GM12878 (cell line): ENCODE measurements at regions of chr4 and their contacts with region 1.

Region 1: DNA sequence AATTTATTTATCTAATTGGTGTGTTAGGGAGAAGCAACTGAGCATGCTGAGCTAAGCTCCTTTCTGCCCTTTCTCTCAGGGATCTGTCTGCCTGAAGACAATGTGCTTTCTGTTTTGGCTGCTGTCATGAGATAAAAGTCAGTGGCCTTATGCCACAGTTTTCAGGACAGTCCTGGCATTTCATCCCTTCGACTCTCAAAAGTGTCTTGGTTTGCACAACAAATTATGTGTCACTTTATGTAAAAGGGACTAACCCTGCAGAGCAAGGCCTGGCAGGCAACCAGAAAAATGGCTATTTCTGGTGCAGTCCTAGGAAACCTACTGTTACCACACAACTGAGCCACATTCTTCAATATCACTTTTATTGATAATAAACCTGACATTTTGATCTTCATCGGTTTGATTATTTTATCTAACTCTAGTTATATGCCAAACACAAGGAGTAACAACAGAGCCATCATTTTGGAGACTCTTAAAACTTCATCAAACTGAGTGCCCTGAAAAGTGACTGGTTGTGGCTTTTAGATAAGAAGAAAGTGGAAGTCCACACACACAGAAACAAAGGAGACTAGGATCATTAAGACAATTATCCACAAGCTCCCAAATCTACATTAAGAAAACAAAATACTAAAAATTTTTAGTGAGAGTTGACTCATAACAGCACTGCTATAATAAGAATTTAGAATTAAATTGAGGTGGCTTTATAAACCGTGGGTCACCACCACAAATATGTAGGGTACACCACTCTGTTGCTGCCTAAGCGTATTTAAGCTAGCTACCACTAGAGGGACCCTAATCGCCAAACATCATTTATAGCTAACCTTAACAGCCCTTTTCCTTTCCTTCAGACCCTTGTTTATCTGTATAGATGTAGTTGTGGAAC is 95.9 kb upstream of the PTPN13 start:
- DNase-seq: no peak
- ATAC-seq: peak; percentile 93
- H3K4me3 ChIP-seq: no peak overlapping the region
- H3K27ac ChIP-seq: no peak overlapping the region
- H3K4me1 ChIP-seq: no peaks in the 10 kb centered on the region
- H3K27me3 ChIP-seq: no peaks in the 10 kb centered on the region
- CTCF ChIP-seq: peak; percentile 74 to 85 (median 84); a peak in 5 of 6 replicates
- EP300 ChIP-seq: no peak
- POLR2A ChIP-seq: no peak
- RAD21 ChIP-seq: peak; percentile 88

Region 2: DNA sequence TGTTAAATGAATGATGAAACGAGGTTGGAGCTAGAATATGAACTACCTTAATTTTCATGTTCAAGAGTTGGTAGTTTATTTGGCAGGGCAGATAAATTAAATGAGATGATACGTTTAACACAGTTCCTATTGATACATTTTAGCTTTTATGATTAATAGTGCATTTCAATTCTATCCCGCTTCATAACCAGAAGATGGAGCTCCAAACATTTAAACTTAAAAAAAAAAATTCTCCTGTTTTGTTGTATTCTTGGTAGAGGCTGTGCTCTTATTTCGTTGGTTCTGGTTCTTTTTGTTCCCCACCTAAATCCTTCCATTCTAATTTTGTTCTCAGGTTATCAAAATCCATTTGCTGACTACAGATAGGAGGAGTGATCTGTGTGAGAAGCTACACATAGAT is 24.1 kb after region 1 on chr4:
- CTCF ChIA-PET with region 1: interaction called, 210 read pairs
- POLR2A ChIA-PET with region 1: interaction called, 10 read pairs
- RAD21 ChIA-PET with region 1: interaction called, 136 read pairs
- SMC1A ChIA-PET with region 1: interaction called, 142 read pairs
- in situ Hi-C with region 1: no loop called
- intact Hi-C with region 1: loop called (anchors 2 kb)
- DNase-seq: no peak
- ATAC-seq: peak; percentile 37
- H3K4me3 ChIP-seq: no peak overlapping the region
- H3K27ac ChIP-seq: no peak overlapping the region
- H3K4me1 ChIP-seq: no peaks in the 10 kb centered on the region
- H3K27me3 ChIP-seq: no peaks in the 10 kb centered on the region
- CTCF ChIP-seq: peak in 1 of 3 experiments; percentile 1; a peak in 1 of 6 replicates
- EP300 ChIP-seq: no peak
- POLR2A ChIP-seq: no peak
- RAD21 ChIP-seq: peak; percentile 31; the same call in 1 of the 2 replicates

Region 3: GRCh38 chr4:86593688-86594558 is 95.7 kb after region 1 on chr4 and contains the start of gene PTPN13:
- CTCF ChIA-PET with region 1: interaction called, 124 read pairs
- POLR2A ChIA-PET with region 1: interaction called, 14 read pairs
- RAD21 ChIA-PET with region 1: interaction called, 177 read pairs
- SMC1A ChIA-PET with region 1: interaction called, 164 read pairs
- in situ Hi-C with region 1: no loop called
- intact Hi-C with region 1: loop called (anchors 2 kb)
- DNase-seq: peak; percentile 84
- ATAC-seq: peak; percentile 87
- H3K4me3 ChIP-seq: peak within 1 kb of the TSS; percentile 48
- H3K27ac ChIP-seq: no peak within 1 kb of the TSS
- H3K4me1 ChIP-seq: no peaks in the 10 kb centered on the region
- H3K27me3 ChIP-seq: peaks cover 0 to 5% of the 10 kb centered on the region in 2 experiments; a peak in 1 of 4 replicates
- CTCF ChIP-seq: peak in 2 of 3 experiments; percentile 7 to 39; a peak in 1 of 6 replicates
- EP300 ChIP-seq: no peak
- POLR2A ChIP-seq: peak; percentile 79
- RAD21 ChIP-seq: peak; percentile 21; the same call in 1 of the 2 replicates
- polyA plus RNA-seq, gene PTPN13: 8.5 to 9.3 TPM

Region 4: GRCh38 chr4:86657910-86658309 is 159.7 kb after region 1 on chr4:
- CTCF ChIA-PET with region 1: interaction called, 16 read pairs
- POLR2A ChIA-PET with region 1: no interaction called
- RAD21 ChIA-PET with region 1: interaction called, 14 read pairs
- SMC1A ChIA-PET with region 1: interaction called, 16 read pairs
- in situ Hi-C with region 1: no loop called
- intact Hi-C with region 1: no loop called
- DNase-seq: peak; percentile 11
- ATAC-seq: peak; percentile 92
- H3K4me3 ChIP-seq: no peak overlapping the region
- H3K27ac ChIP-seq: no peak overlapping the region
- H3K4me1 ChIP-seq: peaks cover 3% of the 10 kb centered on the region; the same call in 1 of the 2 replicates
- H3K27me3 ChIP-seq: no peaks in the 10 kb centered on the region
- CTCF ChIP-seq: peak in 1 of 3 experiments; percentile 24; a peak in 1 of 6 replicates
- EP300 ChIP-seq: no peak
- POLR2A ChIP-seq: no peak
- RAD21 ChIP-seq: no peak

Region 5: GRCh38 chr4:86769794-86770193 is 271.6 kb after region 1 on chr4:
- CTCF ChIA-PET with region 1: interaction called, 12 read pairs
- POLR2A ChIA-PET with region 1: no interaction called
- RAD21 ChIA-PET with region 1: interaction called, 5 read pairs
- SMC1A ChIA-PET with region 1: interaction called, 19 read pairs
- in situ Hi-C with region 1: no loop called
- intact Hi-C with region 1: no loop called
- DNase-seq: no peak
- ATAC-seq: no peak
- H3K4me3 ChIP-seq: no peak overlapping the region
- H3K27ac ChIP-seq: no peak overlapping the region
- H3K4me1 ChIP-seq: no peaks in the 10 kb centered on the region
- H3K27me3 ChIP-seq: no peaks in the 10 kb centered on the region
- CTCF ChIP-seq: no peak
- EP300 ChIP-seq: no peak
- POLR2A ChIP-seq: no peak
- RAD21 ChIP-seq: no peak

Region 6: GRCh38 chr4:86908251-86908657 is 410.0 kb after region 1 on chr4:
- CTCF ChIA-PET with region 1: interaction called, 207 read pairs
- POLR2A ChIA-PET with region 1: interaction called, 3 read pairs
- RAD21 ChIA-PET with region 1: interaction called, 7 read pairs
- SMC1A ChIA-PET with region 1: interaction called, 17 read pairs
- in situ Hi-C with region 1: no loop called
- intact Hi-C with region 1: no loop called
- DNase-seq: no peak
- ATAC-seq: peak; percentile 53
- H3K4me3 ChIP-seq: no peak overlapping the region
- H3K27ac ChIP-seq: peak overlapping the region; percentile 8; the same call in 1 of the 2 replicates
- H3K4me1 ChIP-seq: peaks cover 18% of the 10 kb centered on the region
- H3K27me3 ChIP-seq: no peaks in the 10 kb centered on the region
- CTCF ChIP-seq: no peak
- EP300 ChIP-seq: no peak
- POLR2A ChIP-seq: no peak
- RAD21 ChIP-seq: no peak

Region 7: GRCh38 chr4:87353592-87353991 is 855.4 kb after region 1 on chr4:
- CTCF ChIA-PET with region 1: no interaction called
- POLR2A ChIA-PET with region 1: no interaction called
- RAD21 ChIA-PET with region 1: no interaction called
- SMC1A ChIA-PET with region 1: no interaction called
- in situ Hi-C with region 1: no loop called
- intact Hi-C with region 1: no loop called
- DNase-seq: peak; percentile 13
- ATAC-seq: peak; percentile 83
- H3K4me3 ChIP-seq: no peak overlapping the region
- H3K27ac ChIP-seq: no peak overlapping the region
- H3K4me1 ChIP-seq: peaks cover 9% of the 10 kb centered on the region
- H3K27me3 ChIP-seq: no peaks in the 10 kb centered on the region
- CTCF ChIP-seq: peak; percentile 51 to 74 (median 66); a peak in 5 of 6 replicates
- EP300 ChIP-seq: no peak
- POLR2A ChIP-seq: no peak
- RAD21 ChIP-seq: peak; percentile 84